ENCODE measurements at regions of chr2 and their contacts with region 1.

Region 1: GRCh38 chr2:200963124-200963917 is at the start of gene ORC2:
- DNase-seq: peak; percentile 92 to 97 (median 95)
- ATAC-seq: peak; percentile 98
- H3K4me3 ChIP-seq: peak within 1 kb of the TSS; percentile 89
- H3K4me3 Mint-ChIP-seq: peak within 1 kb of the TSS; percentile 89 to 100 (median 98)
- H3K27ac ChIP-seq: peak within 1 kb of the TSS; percentile 90
- H3K27ac Mint-ChIP-seq: peak within 1 kb of the TSS; percentile 96 to 100 (median 99)
- H3K4me1 ChIP-seq: peaks cover 21 to 32% of the 10 kb centered on the region in 2 donors
- H3K4me1 Mint-ChIP-seq: peaks cover 40 to 83% (median 70%) of the 10 kb centered on the region in 7 donors
- H3K27me3 ChIP-seq: no peaks in the 10 kb centered on the region
- H3K27me3 Mint-ChIP-seq: no peaks in the 10 kb centered on the region
- total RNA-seq, gene ORC2: 29.8 to 78.0 (median 56.2) TPM

Region 2: DNA sequence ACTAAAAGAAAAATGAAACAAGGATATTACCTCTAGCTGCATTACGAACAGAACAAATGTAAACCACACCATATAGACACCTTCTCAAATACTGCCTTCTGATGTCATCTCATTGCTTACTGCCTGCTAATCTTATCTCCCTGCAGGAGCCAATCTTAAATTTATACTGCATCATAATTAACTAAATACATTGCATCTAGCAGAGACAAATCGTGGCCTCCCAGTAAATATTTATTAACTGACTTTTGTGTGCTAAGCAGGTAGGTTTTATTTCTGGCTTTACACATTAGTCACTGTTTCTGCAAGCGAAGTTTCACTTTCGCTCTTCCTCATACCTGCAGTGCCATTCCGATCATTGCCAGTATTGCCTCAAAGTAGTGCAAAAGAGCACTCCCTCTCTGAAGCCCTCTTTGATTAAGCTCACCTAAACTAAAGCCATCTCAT is 589.3 kb before region 1 on chr2:
- CTCF ChIA-PET with region 1: no interaction called
- POLR2A ChIA-PET with region 1: no interaction called
- intact Hi-C with region 1: loop called in 1 of 2 experiments (anchors 10 kb)
- DNase-seq: peak in 7 of 9 donors; percentile 41 to 66 (median 56)
- ATAC-seq: peak; percentile 86
- H3K4me3 ChIP-seq: peak overlapping the region; percentile 74
- H3K4me3 Mint-ChIP-seq: peak overlapping the region; percentile 74 to 96 (median 89)
- H3K27ac ChIP-seq: peak overlapping the region; percentile 66
- H3K27ac Mint-ChIP-seq: peak overlapping the region; percentile 86 to 96 (median 93)
- H3K4me1 ChIP-seq: peaks cover 32 to 34% of the 10 kb centered on the region in 2 donors
- H3K4me1 Mint-ChIP-seq: peaks cover 24 to 59% (median 52%) of the 10 kb centered on the region in 7 donors
- H3K27me3 ChIP-seq: no peaks in the 10 kb centered on the region
- H3K27me3 Mint-ChIP-seq: no peaks in the 10 kb centered on the region

Region 3: DNA sequence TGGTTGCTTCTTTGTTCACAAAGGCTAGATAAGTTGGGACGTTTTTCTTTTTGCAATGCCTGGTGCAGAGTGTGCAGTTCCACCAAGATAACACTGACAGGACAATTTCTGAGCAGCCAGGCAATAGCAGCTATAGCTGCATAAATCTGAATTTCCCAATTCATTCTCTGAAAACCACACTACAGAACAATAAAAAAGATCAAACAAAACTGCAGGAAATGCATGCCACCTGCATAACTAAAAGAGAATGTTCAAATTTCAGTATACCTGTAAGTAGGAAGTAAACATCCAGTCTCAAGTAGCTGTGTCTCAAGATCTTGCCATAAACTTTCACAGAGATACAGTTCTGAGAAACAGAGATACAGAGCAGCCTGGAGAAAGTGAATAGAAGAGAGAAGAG is 448.2 kb before region 1 on chr2:
- CTCF ChIA-PET with region 1: no interaction called
- POLR2A ChIA-PET with region 1: no interaction called
- intact Hi-C with region 1: no loop called
- DNase-seq: peak in 5 of 9 donors; percentile 30 to 57 (median 45)
- ATAC-seq: peak; percentile 60
- H3K4me3 ChIP-seq: no peak overlapping the region
- H3K4me3 Mint-ChIP-seq: peak overlapping the region in 5 of 10 donors; percentile 2 to 56 (median 21)
- H3K27ac ChIP-seq: no peak overlapping the region
- H3K27ac Mint-ChIP-seq: peak overlapping the region; percentile 3 to 75 (median 51)
- H3K4me1 ChIP-seq: peaks cover 6 to 22% of the 10 kb centered on the region in 2 donors
- H3K4me1 Mint-ChIP-seq: peaks cover 0 to 12% (median 8%) of the 10 kb centered on the region in 7 donors
- H3K27me3 ChIP-seq: no peaks in the 10 kb centered on the region
- H3K27me3 Mint-ChIP-seq: peaks cover 0 to 4% (median 0%) of the 10 kb centered on the region in 5 donors

Region 4: DNA sequence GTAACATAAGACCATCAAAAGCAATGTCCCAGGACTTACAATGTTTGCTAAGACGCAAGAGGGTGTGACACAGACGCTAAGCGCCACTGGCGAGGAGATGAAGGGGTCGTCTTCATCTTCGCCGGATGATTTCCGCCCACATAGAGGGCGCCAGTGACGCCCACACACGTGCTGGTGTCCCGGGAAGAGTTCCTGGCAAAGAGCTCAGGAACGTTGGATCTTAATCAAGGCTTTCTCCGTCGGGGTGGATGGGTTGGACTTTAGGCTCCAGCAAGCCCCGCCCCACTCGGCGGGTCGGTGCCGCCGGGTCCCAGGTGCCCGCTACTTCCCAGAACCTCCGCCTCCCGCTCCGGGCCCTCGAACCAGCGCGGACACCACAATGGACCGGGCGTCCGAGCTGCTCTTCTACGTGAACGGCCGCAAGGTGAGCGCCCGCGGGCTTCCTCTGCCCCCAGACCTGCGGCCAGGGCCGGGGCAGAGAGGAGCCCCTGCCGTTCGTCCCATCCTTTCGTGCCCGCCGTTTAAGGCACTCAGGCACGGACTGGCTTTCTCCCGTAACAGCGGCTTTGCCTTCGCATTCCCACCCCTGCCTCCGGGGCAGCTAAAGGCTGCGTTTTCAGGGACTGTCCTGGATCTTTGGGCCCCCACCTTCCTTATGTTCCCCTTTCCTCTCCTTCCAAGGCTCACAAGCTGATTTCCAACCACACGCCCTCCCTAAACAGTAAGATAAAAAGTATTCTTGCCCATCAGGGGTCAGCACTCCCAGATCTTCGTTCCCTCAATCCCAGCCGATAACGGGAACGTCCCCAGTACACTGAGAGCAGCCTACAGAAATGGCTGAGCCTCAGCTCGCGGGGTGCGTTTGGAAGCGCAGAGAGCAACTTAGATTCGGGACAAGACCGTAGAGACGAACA is 377.3 kb before region 1 on chr2 and contains the start of gene AOX1:
- CTCF ChIA-PET with region 1: no interaction called
- POLR2A ChIA-PET with region 1: no interaction called
- intact Hi-C with region 1: no loop called
- DNase-seq: peak in 5 of 9 donors; percentile 13 to 24 (median 20)
- ATAC-seq: peak; percentile 69
- H3K4me3 ChIP-seq: peak within 1 kb of the TSS; percentile 61
- H3K4me3 Mint-ChIP-seq: peak within 1 kb of the TSS; percentile 78 to 92 (median 84)
- H3K27ac ChIP-seq: no peak within 1 kb of the TSS
- H3K27ac Mint-ChIP-seq: peak within 1 kb of the TSS in 3 of 9 donors; percentile 25 to 51 (median 44)
- H3K4me1 ChIP-seq: no peaks in the 10 kb centered on the region
- H3K4me1 Mint-ChIP-seq: peaks cover 0 to 15% (median 8%) of the 10 kb centered on the region in 7 donors
- H3K27me3 ChIP-seq: no peaks in the 10 kb centered on the region
- H3K27me3 Mint-ChIP-seq: peaks cover 13 to 24% (median 14%) of the 10 kb centered on the region in 5 donors
- total RNA-seq, gene AOX1: 0.24 to 0.34 TPM in 2 of 5 experiments, not detected in the others

Region 5: DNA sequence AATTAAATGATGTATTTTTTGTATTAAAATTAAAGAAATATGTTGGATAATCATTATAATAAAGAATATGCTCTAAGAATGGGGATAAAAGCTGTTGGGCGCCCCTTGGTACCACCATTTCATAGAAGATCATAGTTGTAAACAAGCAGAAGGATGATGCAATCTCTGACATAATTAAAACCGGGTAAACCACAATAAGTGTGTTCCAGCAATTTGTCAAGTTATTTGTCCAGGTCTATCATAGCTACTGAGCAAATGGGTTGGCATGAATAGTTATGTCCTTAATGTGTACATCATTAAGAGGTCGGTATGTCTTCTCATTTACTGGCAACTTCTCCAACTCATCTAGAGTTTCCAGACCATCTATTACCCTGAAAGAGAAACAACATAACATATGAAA is 92.2 kb before region 1 on chr2:
- CTCF ChIA-PET with region 1: interaction called, 3 read pairs
- POLR2A ChIA-PET with region 1: interaction called, 11 read pairs
- intact Hi-C with region 1: no loop called
- DNase-seq: no peak
- ATAC-seq: no peak
- H3K4me3 ChIP-seq: no peak overlapping the region
- H3K4me3 Mint-ChIP-seq: no peak overlapping the region
- H3K27ac ChIP-seq: no peak overlapping the region
- H3K27ac Mint-ChIP-seq: peak overlapping the region in 1 of 9 donors; percentile 14
- H3K4me1 ChIP-seq: peaks cover 0 to 3% of the 10 kb centered on the region in 2 donors
- H3K4me1 Mint-ChIP-seq: peaks cover 0 to 21% (median 10%) of the 10 kb centered on the region in 7 donors
- H3K27me3 ChIP-seq: no peaks in the 10 kb centered on the region
- H3K27me3 Mint-ChIP-seq: no peaks in the 10 kb centered on the region

Region 6: DNA sequence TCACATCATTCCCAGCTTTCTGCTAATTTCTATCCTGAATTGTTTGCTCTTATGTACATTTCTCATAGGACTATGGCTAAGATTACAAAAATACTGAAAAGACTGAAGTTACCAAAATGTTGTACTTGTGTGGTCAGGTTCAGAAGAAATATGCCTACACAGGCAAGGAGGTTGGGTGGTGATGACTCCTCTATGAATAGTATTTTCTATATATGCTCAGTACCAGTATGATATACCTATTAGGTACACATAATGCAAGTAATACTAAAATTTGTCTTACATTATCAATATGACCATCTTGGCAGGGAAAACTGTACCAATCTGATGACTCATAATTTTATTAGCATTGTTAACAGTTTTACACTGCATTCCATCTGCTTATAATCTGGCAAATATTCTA is 12.4 kb after region 1 on chr2:
- CTCF ChIA-PET with region 1: interaction called, 5 read pairs
- POLR2A ChIA-PET with region 1: interaction called, 14 read pairs
- intact Hi-C with region 1: no loop called
- DNase-seq: no peak
- ATAC-seq: no peak
- H3K4me3 ChIP-seq: no peak overlapping the region
- H3K4me3 Mint-ChIP-seq: no peak overlapping the region
- H3K27ac ChIP-seq: no peak overlapping the region
- H3K27ac Mint-ChIP-seq: peak overlapping the region in 1 of 9 donors; percentile 39
- H3K4me1 ChIP-seq: no peaks in the 10 kb centered on the region
- H3K4me1 Mint-ChIP-seq: peaks cover 0 to 3% (median 0%) of the 10 kb centered on the region in 7 donors
- H3K27me3 ChIP-seq: no peaks in the 10 kb centered on the region
- H3K27me3 Mint-ChIP-seq: no peaks in the 10 kb centered on the region

Region 7: DNA sequence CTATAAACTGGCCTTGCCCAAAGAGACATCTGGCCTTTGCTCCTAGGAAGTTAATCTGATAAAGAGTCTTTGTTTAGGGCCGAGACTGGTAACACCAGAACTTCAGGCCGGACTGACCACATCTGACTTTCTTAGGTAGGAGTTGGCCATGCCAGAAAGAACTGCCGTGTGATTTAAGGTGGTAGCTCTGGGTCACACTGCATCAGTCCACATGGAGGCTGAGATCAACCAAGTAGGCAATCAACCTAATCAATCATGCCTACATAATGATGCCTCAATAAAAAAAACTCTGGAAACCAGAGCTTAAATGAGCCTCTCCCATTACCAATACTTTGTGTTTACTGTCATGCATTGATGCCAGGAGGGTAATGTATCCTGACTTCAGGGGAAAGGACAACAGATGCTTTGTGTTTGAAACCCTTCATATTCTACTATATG is 44.3 kb after region 1 on chr2:
- CTCF ChIA-PET with region 1: no interaction called
- POLR2A ChIA-PET with region 1: no interaction called
- intact Hi-C with region 1: no loop called
- DNase-seq: no peak
- ATAC-seq: no peak
- H3K4me3 ChIP-seq: no peak overlapping the region
- H3K4me3 Mint-ChIP-seq: no peak overlapping the region
- H3K27ac ChIP-seq: no peak overlapping the region
- H3K27ac Mint-ChIP-seq: no peak overlapping the region
- H3K4me1 ChIP-seq: no peaks in the 10 kb centered on the region
- H3K4me1 Mint-ChIP-seq: no peaks in the 10 kb centered on the region
- H3K27me3 ChIP-seq: no peaks in the 10 kb centered on the region
- H3K27me3 Mint-ChIP-seq: no peaks in the 10 kb centered on the region

Region 8: GRCh38 chr2:201176081-201176481 is 212.8 kb after region 1 on chr2:
- CTCF ChIA-PET with region 1: interaction called, 4 read pairs
- POLR2A ChIA-PET with region 1: interaction called, 4 read pairs
- intact Hi-C with region 1: loop called (anchors 1 to 2 kb)
- DNase-seq: no peak
- ATAC-seq: no peak
- H3K4me3 ChIP-seq: no peak overlapping the region
- H3K4me3 Mint-ChIP-seq: no peak overlapping the region
- H3K27ac ChIP-seq: no peak overlapping the region
- H3K27ac Mint-ChIP-seq: peak overlapping the region in 2 of 9 donors; percentile 41 to 47
- H3K4me1 ChIP-seq: peaks cover 0 to 2% of the 10 kb centered on the region in 2 donors
- H3K4me1 Mint-ChIP-seq: peaks cover 5 to 26% (median 12%) of the 10 kb centered on the region in 7 donors
- H3K27me3 ChIP-seq: no peaks in the 10 kb centered on the region
- H3K27me3 Mint-ChIP-seq: no peaks in the 10 kb centered on the region